ENCODE measurements at regions of chr1 and their contacts with region 1.

Region 1: DNA sequence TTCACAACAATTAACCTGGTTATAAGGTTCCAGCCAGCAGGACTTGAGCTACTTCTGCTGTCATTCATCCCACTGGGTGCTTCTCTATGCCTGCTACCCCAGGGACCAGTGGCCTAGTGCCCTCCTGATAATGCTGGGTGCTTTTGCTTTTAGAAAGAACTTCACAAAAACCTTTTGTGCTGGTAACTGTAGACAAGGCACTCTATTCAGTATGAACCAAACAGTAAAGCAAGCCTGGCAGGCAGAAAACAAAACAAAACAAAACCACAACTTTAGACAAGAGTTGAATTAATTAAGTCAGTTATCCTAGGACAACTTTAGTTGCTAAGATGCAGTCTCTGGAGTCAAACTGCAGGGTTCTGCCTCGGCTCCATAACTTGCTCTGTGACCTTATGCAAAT is 61.9 kb upstream of the ADGRL2 start:
- DNase-seq: no peak
- H3K4me3 ChIP-seq: no peak overlapping the region
- H3K27ac ChIP-seq: peak overlapping the region; percentile 43 to 65
- H3K4me1 ChIP-seq: no peaks in the 10 kb centered on the region
- H3K27me3 ChIP-seq: no peaks in the 10 kb centered on the region
- CTCF ChIP-seq: no peak
- POLR2A ChIP-seq: no peak

Region 2: GRCh38 chr1:80722611-80723010 is 1016.3 kb before region 1 on chr1:
- intact Hi-C with region 1: loop called (anchors 10 kb)
- DNase-seq: no peak
- H3K4me3 ChIP-seq: no peak overlapping the region
- H3K27ac ChIP-seq: no peak overlapping the region
- H3K4me1 ChIP-seq: no peaks in the 10 kb centered on the region
- H3K27me3 ChIP-seq: no peaks in the 10 kb centered on the region
- CTCF ChIP-seq: no peak
- POLR2A ChIP-seq: no peak

Measured in breast epithelium (tissue), 4 donors.